Endothelial cell of umbilical vein (primary cell): ENCODE measurements at regions of chr7 and their contacts with region 1.

Region 1: DNA sequence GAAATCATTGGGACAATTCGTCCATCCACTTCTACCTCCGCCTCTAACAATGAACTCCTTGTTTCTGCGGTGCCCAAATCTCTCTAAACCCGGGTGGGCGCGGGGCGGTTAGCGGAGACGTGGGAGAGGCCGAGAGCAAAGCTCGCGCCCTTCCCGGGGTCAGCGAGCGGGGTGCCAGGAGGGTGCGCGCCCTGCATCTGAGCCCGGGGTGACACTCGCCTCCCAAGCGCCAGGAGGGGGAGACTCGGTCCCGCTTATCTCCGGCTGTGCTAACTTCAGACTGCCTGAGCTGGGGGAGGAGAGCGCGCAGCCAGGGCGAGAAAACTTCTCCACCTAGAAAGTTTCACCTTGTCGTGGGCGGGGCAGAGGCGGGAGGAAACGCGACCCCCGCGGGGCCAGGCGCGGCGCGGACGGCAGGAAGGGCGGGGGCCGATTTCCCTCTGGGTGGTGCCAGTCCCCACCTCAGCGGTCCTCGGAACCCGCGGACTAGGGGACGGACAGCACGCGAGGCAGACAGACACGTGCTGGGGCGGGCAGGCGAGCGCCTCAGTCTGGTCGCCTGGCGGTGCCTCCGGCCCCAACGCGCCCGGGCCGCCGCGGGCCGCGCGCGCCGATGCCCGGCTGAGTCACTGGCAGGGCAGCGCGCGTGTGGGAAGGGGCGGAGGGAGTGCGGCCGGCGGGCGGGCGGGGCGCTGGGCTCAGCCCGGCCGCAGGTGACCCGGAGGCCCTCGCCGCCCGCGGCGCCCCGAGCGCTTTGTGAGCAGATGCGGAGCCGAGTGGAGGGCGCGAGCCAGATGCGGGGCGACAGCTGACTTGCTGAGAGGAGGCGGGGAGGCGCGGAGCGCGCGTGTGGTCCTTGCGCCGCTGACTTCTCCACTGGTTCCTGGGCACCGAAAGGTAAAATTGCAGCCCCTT is at the start of gene MET:
- DNase-seq: peak; percentile 86
- H3K4me3 ChIP-seq: peak within 1 kb of the TSS; percentile 72 to 92 (median 80)
- H3K27ac ChIP-seq: peak within 1 kb of the TSS; percentile 81
- H3K4me1 ChIP-seq: peaks cover 27% of the 10 kb centered on the region
- H3K27me3 ChIP-seq: no peaks in the 10 kb centered on the region
- CTCF ChIP-seq: peak; percentile 21 to 62
- POLR2A ChIP-seq: peak; percentile 56
- total RNA-seq, gene MET: 44.5 and 52.0 TPM in 2 replicates

Region 2: GRCh38 chr7:115516341-115516740 is 1155.6 kb before region 1 on chr7:
- CTCF ChIA-PET with region 1: no interaction called
- POLR2A ChIA-PET with region 1: no interaction called
- dilution Hi-C with region 1: no loop called
- intact Hi-C with region 1: no loop called
- DNase-seq: no peak
- H3K4me3 ChIP-seq: no peak overlapping the region
- H3K27ac ChIP-seq: no peak overlapping the region
- H3K4me1 ChIP-seq: no peaks in the 10 kb centered on the region
- H3K27me3 ChIP-seq: no peaks in the 10 kb centered on the region
- CTCF ChIP-seq: no peak
- POLR2A ChIP-seq: no peak

Region 3: GRCh38 chr7:116173051-116174028 is 498.6 kb before region 1 on chr7:
- CTCF ChIA-PET with region 1: no interaction called
- POLR2A ChIA-PET with region 1: no interaction called
- dilution Hi-C with region 1: no loop called
- intact Hi-C with region 1: loop called (anchors 5 kb)
- DNase-seq: peak; percentile 84
- H3K4me3 ChIP-seq: no peak overlapping the region
- H3K27ac ChIP-seq: no peak overlapping the region
- H3K4me1 ChIP-seq: no peaks in the 10 kb centered on the region
- H3K27me3 ChIP-seq: peaks cover 0 to 3% of the 10 kb centered on the region in 2 experiments
- CTCF ChIP-seq: peak in 1 of 2 donors; percentile 20
- POLR2A ChIP-seq: no peak

Region 4: DNA sequence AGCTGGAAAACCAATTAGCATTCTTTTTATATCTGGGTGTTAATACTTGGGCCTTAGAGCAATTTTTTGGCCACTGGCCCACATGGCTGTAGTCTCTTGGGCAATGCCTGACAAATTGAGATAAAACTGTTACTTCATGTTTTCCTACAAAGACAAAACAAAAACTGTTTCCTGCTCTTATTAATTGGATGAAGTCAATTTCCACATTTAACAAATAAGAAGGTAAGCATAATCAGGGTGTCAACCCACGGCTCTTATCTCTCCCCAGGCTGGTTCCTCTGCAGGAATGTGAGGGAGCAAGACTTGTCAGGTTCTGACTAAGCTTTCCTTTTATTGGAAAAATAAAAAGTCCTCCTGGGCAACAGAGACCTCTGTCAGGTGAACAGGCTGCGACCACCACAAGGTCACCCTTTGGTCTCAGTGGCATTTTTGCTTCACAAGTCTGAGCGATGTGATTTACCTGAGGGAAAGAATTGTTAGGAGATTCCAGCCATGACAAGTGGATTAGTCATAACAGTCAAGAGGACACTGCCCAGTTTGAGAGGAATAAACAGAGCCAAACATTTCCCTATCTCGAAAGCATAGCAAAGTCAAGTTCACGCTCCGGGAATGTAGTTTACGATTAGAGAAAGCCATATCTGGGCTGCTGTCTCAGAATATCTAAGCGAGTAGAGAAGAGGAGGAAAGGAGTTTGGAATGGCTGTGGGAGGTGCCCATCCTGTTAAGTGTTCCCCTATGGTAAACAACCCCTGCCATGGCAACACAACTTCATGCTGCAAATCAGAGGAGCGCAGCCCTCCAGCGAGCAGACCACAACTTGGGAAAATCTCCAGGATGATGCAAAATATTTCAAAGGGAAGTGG is 317.2 kb before region 1 on chr7:
- CTCF ChIA-PET with region 1: no interaction called
- POLR2A ChIA-PET with region 1: no interaction called
- dilution Hi-C with region 1: no loop called
- intact Hi-C with region 1: no loop called
- DNase-seq: peak; percentile 99
- H3K4me3 ChIP-seq: peak overlapping the region in 1 of 3 experiments; percentile 14
- H3K27ac ChIP-seq: peak overlapping the region; percentile 99
- H3K4me1 ChIP-seq: peaks cover 63% of the 10 kb centered on the region
- H3K27me3 ChIP-seq: no peaks in the 10 kb centered on the region
- CTCF ChIP-seq: no peak
- POLR2A ChIP-seq: no peak

Region 5: GRCh38 chr7:116616555-116617059 is 55.3 kb before region 1 on chr7:
- CTCF ChIA-PET with region 1: no interaction called
- POLR2A ChIA-PET with region 1: no interaction called
- dilution Hi-C with region 1: no loop called
- intact Hi-C with region 1: loop called (anchors 1 kb)
- DNase-seq: peak; percentile 91
- H3K4me3 ChIP-seq: no peak overlapping the region
- H3K27ac ChIP-seq: peak overlapping the region; percentile 87
- H3K4me1 ChIP-seq: peaks cover 35% of the 10 kb centered on the region
- H3K27me3 ChIP-seq: no peaks in the 10 kb centered on the region
- CTCF ChIP-seq: no peak
- POLR2A ChIP-seq: no peak

Region 6: DNA sequence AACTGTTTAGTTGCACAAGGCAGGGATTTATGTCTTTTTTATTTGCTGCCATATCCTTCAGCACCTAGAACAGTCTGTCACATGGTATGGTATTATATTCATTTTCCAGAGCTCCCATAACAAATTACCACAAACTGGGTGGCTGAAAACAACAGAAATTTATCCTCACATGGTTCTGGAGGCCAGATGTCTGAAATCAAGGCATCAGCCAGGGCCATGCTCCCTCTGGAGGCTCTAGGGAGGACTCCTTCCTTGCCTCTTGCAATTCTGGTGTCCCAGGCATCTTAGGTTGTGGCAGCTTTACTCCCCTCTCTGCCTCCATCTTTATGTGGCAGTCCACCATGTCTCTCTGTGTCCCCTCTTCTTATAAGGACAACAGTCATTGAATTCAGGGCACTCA is 43.1 kb after region 1 on chr7:
- CTCF ChIA-PET with region 1: interaction called, 15 read pairs
- POLR2A ChIA-PET with region 1: no interaction called
- dilution Hi-C with region 1: no loop called
- intact Hi-C with region 1: no loop called
- DNase-seq: no peak
- H3K4me3 ChIP-seq: no peak overlapping the region
- H3K27ac ChIP-seq: no peak overlapping the region
- H3K4me1 ChIP-seq: peaks cover 12% of the 10 kb centered on the region
- H3K27me3 ChIP-seq: no peaks in the 10 kb centered on the region
- CTCF ChIP-seq: peak in 1 of 2 donors; percentile 5
- POLR2A ChIP-seq: no peak

Region 7: DNA sequence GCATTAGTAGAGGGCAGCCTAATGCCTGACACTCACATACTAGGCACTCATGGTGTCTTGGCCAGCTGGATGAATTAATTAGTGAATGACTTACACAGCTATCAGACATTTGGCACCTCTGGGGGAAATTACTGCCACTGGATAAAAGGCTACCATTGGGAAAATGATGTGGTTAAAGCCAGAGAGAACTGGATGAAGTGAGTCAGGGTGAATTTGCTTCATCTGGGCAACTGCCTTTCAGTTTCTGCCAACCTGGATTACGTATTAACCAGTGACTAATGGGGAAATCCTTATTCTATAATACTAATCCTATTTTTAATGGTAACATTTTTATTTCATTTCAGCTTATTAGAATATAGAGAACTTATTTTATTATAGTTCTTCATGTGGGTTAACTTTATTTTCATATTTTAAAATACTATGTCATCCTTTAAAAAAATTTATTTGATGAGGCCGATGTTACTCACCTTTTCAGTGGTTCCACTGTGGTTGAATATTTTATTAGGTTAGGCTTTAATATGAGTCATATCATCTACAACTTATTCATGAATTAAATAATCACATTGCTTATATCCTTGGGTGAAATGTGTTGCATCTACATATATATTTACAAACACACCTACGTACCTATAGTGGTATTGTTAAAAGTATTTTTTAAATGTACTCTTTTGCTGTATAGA is 104.8 kb after region 1 on chr7:
- CTCF ChIA-PET with region 1: interaction called, 11 read pairs
- POLR2A ChIA-PET with region 1: no interaction called
- dilution Hi-C with region 1: no loop called
- intact Hi-C with region 1: loop called (anchors 1 kb)
- DNase-seq: peak; percentile 78
- H3K4me3 ChIP-seq: no peak overlapping the region
- H3K27ac ChIP-seq: peak overlapping the region; percentile 47
- H3K4me1 ChIP-seq: peaks cover 53% of the 10 kb centered on the region
- H3K27me3 ChIP-seq: no peaks in the 10 kb centered on the region
- CTCF ChIP-seq: no peak
- POLR2A ChIP-seq: no peak

Region 8: GRCh38 chr7:116802746-116803152 is 130.8 kb after region 1 on chr7:
- CTCF ChIA-PET with region 1: interaction called, 15 read pairs
- POLR2A ChIA-PET with region 1: no interaction called
- dilution Hi-C with region 1: no loop called
- intact Hi-C with region 1: loop called (anchors 1 kb)
- DNase-seq: peak; percentile 75
- H3K4me3 ChIP-seq: no peak overlapping the region
- H3K27ac ChIP-seq: no peak overlapping the region
- H3K4me1 ChIP-seq: peaks cover 14% of the 10 kb centered on the region
- H3K27me3 ChIP-seq: no peaks in the 10 kb centered on the region
- CTCF ChIP-seq: peak; percentile 40 to 46
- POLR2A ChIP-seq: no peak

Region 9: GRCh38 chr7:116862234-116862950 is 190.5 kb after region 1 on chr7 and contains the start of gene CAPZA2:
- CTCF ChIA-PET with region 1: no interaction called
- POLR2A ChIA-PET with region 1: no interaction called
- dilution Hi-C with region 1: no loop called
- intact Hi-C with region 1: loop called (anchors 2 kb)
- DNase-seq: peak; percentile 93
- H3K4me3 ChIP-seq: peak within 1 kb of the TSS; percentile 55 to 95 (median 92)
- H3K27ac ChIP-seq: peak within 1 kb of the TSS; percentile 65
- H3K4me1 ChIP-seq: peaks cover 19% of the 10 kb centered on the region
- H3K27me3 ChIP-seq: no peaks in the 10 kb centered on the region
- CTCF ChIP-seq: peak in 1 of 2 donors; percentile 34
- POLR2A ChIP-seq: peak; percentile 80
- total RNA-seq, gene CAPZA2: 343 and 347 TPM in 2 replicates